Right ventricle myocardium superior (tissue), 1 donor: ENCODE measurements at regions of chr4 and their contacts with region 1.

Region 1: GRCh38 chr4:92387459-92388069 is 83.8 kb downstream of the GRID2 start:
- DNase-seq: no peak
- ATAC-seq: peak; percentile 74

Region 2: DNA sequence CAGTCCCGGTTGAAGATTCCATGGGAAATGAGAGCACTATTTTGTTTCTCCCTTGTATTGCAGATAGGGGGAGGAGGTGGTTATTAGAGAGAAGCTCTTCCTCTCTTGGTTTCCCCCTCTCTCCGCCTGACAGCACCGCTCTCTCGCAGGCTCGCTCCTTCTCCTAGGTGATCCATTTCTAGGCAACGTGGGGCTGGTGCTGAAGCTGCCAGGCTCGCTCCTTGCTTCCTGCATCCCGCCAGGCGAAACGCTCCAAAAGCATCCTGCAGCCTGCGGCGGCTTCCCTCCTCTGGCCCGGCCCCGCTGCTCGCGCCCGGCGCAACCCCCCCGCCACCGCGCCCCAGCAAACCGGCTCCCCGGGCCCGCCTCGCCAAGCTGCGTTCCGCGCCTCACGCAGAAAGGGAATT is 83.9 kb before region 1 on chr4 and contains the start of gene GRID2:
- intact Hi-C with region 1: loop called (anchors 5 kb)
- DNase-seq: peak; percentile 34
- ATAC-seq: peak; percentile 62
- total RNA-seq, gene GRID2: not detected

Region 3: GRCh38 chr4:92362028-92362427 is 25.5 kb before region 1 on chr4:
- intact Hi-C with region 1: no loop called
- DNase-seq: no peak
- ATAC-seq: no peak